ENCODE measurements at regions of chr11 and their contacts with region 1.

Region 1: DNA sequence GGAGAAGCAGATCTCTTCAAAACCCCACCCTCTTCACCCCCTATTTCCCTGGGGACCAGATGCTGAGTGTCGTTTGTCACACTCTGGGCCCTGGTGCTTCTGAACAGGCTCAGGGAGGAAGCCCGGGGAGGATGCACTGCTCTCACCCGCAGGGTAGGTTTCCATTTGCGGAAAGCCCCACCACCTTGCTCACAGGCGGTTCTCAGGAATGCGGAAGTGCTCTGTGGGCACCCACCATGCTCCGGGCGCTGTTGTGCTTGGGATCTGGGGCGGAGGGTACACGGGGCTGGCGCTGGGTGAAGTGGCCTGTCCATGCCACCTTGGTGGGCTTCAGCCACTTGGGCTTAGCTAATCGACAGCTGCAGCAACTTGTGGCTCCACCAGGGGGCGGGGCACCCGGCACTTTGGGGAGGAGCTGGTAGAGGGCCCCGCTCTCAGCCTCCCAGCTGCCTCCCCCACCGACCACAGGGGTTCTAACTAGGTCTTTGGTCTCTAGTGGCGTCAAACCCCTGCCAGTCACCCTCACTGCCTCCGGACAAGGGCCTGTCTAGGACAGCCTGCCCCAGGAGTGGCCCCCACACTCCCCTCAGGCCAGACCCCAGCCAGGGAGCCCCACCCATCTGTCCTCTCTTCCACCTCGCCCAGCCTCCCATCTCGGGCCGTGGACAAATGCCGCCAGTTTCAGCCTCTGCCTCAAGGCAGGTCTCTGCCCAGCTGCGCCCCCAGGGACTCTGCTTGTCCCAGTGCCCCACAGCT is 7.4 kb downstream of the NDUFV1 start:
- DNase-seq: peak; percentile 84
- ATAC-seq: peak; percentile 39
- H3K4me3 Mint-ChIP-seq: no peak overlapping the region
- H3K27ac Mint-ChIP-seq: no peak overlapping the region
- H3K4me1 Mint-ChIP-seq: peaks cover 40% of the 10 kb centered on the region
- H3K27me3 Mint-ChIP-seq: peaks cover 31% of the 10 kb centered on the region
- CTCF ChIP-seq: peak; percentile 76

Region 2: GRCh38 chr11:67519726-67520125 is 94.4 kb before region 1 on chr11:
- CTCF ChIA-PET with region 1: no interaction called
- POLR2A ChIA-PET with region 1: no interaction called
- DNase-seq: no peak
- ATAC-seq: no peak
- H3K4me3 Mint-ChIP-seq: no peak overlapping the region
- H3K27ac Mint-ChIP-seq: no peak overlapping the region
- H3K4me1 Mint-ChIP-seq: no peaks in the 10 kb centered on the region
- H3K27me3 Mint-ChIP-seq: peaks cover 3% of the 10 kb centered on the region; the same call in 1 of the 2 replicates
- CTCF ChIP-seq: no peak

Region 3: DNA sequence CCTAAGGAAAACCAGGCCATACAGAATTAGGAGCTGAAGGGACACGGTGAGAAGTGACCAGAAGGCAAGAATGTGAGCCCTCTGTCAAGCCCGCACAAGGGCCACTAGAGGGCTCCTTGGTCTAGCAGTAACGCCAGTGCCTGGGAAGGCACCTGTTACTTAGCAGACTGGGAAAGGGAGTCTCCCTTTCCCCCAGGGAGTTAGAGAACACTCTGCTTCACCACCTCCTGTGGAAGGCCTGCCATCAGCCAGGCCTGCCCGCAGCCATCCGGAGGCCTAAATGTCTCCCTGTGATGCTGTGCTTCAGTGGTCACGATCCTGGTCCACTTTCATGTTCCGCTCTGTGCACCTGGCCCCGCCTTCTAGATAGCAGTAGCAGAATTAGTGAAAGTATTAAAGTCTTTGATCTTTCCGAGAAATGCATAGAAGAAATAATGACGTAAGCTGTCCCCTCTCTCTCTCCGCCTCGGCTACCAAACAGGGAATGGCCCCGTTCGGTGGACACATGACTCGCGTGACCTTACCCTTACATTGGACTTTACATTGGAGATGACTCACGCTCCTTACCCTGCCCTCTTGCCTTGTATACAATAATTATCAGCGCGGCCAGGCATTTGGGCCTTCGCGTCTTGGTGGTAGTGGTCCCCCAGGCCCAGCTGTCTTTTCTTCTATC is 41.3 kb before region 1 on chr11:
- CTCF ChIA-PET with region 1: interaction called, 32 read pairs
- POLR2A ChIA-PET with region 1: no interaction called
- DNase-seq: peak; percentile 71
- ATAC-seq: peak; percentile 60
- H3K4me3 Mint-ChIP-seq: no peak overlapping the region
- H3K27ac Mint-ChIP-seq: no peak overlapping the region
- H3K4me1 Mint-ChIP-seq: no peaks in the 10 kb centered on the region
- H3K27me3 Mint-ChIP-seq: peaks cover 30% of the 10 kb centered on the region
- CTCF ChIP-seq: 0 out of 2 replicates have a peak, but pooled peaks have one; percentile 39

Region 4: DNA sequence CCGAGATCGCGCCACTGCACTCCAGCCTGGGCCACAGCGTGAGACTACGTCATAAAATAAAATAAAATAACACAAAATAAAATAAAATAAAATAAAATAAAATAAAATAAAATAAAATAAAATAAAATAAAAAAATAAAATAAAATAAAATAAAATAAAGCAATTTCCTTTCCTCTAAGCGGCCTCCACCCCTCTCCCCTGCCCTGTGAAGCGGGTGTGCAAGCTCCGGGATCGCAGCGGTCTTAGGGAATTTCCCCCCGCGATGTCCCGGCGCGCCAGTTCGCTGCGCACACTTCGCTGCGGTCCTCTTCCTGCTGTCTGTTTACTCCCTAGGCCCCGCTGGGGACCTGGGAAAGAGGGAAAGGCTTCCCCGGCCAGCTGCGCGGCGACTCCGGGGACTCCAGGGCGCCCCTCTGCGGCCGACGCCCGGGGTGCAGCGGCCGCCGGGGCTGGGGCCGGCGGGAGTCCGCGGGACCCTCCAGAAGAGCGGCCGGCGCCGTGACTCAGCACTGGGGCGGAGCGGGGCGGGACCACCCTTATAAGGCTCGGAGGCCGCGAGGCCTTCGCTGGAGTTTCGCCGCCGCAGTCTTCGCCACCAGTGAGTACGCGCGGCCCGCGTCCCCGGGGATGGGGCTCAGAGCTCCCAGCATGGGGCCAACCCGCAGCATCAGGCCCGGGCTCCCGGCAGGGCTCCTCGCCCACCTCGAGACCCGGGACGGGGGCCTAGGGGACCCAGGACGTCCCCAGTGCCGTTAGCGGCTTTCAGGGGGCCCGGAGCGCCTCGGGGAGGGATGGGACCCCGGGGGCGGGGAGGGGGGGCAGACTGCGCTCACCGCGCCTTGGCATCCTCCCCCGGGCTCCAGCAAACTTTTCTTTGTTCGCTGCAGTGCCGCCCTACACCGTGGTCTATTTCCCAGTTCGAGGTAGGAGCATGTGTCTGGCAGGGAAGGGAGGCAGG is 30.6 kb before region 1 on chr11 and contains the start of gene GSTP1:
- CTCF ChIA-PET with region 1: interaction called, 47 read pairs
- POLR2A ChIA-PET with region 1: interaction called, 3 read pairs
- DNase-seq: peak; percentile 86
- ATAC-seq: peak; percentile 86
- H3K4me3 Mint-ChIP-seq: peak within 1 kb of the TSS; percentile 85
- H3K27ac Mint-ChIP-seq: peak within 1 kb of the TSS; percentile 100
- H3K4me1 Mint-ChIP-seq: peaks cover 53% of the 10 kb centered on the region
- H3K27me3 Mint-ChIP-seq: no peaks in the 10 kb centered on the region; the same call in 1 of the 2 replicates
- CTCF ChIP-seq: peak; percentile 69
- total RNA-seq, gene GSTP1: 1,404 to 1,452 TPM (median 1,412 TPM) in 3 replicates

Region 5: GRCh38 chr11:67592880-67593564 is 21.1 kb before region 1 on chr11:
- CTCF ChIA-PET with region 1: interaction called, 14 read pairs
- POLR2A ChIA-PET with region 1: no interaction called
- DNase-seq: no peak
- ATAC-seq: peak; percentile 53
- H3K4me3 Mint-ChIP-seq: no peak overlapping the region
- H3K27ac Mint-ChIP-seq: no peak overlapping the region
- H3K4me1 Mint-ChIP-seq: peaks cover 14% of the 10 kb centered on the region
- H3K27me3 Mint-ChIP-seq: peaks cover 5% of the 10 kb centered on the region
- CTCF ChIP-seq: no peak

Region 6: DNA sequence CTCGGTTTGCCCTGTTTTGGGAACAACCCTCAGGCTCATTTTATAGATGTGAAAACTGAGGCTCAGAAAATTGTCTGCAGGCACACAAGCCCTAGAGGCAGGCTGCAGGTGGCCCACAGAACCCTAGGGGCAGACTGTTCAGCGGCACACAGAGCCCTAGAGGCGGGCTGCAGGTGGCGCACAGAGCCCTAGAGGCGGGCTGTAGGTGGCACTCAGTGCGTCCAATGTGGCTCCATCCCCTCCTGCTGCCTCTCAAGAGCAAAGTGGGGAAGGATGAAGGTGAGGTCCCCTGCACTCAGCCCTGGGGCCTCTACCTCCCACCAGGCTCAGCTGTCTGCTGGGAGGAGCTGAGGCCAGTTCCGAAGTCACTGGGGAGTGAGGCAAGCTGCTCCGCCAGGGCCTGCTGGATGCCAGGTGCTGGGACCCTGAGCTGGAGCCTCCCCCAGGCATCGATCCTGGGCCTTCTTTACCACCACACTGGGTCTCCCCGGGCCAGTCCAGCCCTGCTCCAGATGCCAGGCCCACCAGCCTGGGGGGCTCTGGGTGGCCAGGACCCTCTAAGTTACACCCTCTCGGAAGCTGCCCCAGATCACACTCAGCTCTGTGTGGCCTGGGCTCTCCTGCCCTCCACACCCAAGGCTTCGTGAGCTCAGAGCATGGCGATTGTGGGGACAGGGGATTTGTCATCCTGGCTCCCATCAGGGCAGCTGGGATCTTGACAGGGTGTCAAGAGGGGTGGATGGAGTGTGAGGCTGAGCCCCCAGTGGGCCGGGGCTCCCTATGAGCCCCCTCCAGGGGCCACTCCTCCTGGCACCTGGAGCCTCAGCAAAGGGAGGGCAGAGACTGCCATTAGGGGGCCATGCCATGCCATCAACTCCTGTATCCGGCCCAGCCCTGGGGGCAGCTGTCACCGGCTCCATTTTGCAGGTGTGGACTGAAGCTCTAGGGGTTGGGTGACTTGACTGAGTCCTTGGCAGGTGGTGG is 34.3 kb after region 1 on chr11:
- CTCF ChIA-PET with region 1: interaction called, 11 read pairs
- POLR2A ChIA-PET with region 1: no interaction called
- DNase-seq: peak; percentile 71
- ATAC-seq: peak; percentile 89
- H3K4me3 Mint-ChIP-seq: no peak overlapping the region
- H3K27ac Mint-ChIP-seq: no peak overlapping the region
- H3K4me1 Mint-ChIP-seq: peaks cover 6% of the 10 kb centered on the region
- H3K27me3 Mint-ChIP-seq: no peaks in the 10 kb centered on the region; the same call in 1 of the 2 replicates
- CTCF ChIP-seq: no peak

Region 7: DNA sequence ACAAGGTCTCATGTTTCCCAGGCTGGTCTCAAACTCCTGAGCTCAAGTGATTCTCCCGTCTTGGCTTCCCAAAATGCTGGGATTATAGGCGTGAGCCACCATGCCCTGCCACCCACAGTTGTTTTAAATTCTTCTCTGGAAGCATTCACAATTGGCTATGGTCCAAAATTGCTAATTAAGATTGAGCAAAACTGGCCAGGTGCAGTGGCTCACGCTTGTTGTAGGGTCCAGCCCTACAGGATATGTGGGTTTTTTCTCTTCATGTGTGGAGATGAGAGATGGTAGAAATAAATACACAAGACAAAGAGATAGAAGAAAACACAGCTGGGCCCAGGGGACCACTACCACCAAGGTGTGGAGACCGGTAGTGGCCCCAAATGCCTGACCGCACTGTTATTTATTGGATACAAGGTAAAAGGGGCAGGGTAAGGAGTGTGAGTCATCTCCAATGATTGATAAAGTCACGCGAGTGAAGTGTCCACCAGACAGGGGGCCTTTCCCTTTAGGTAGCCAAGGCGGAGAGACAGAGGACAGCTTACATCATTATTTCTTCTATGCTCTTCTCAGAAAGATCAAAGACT is 44.6 kb after region 1 on chr11:
- CTCF ChIA-PET with region 1: interaction called, 11 read pairs
- POLR2A ChIA-PET with region 1: no interaction called
- DNase-seq: no peak
- ATAC-seq: no peak
- H3K4me3 Mint-ChIP-seq: no peak overlapping the region
- H3K27ac Mint-ChIP-seq: no peak overlapping the region
- H3K4me1 Mint-ChIP-seq: no peaks in the 10 kb centered on the region
- H3K27me3 Mint-ChIP-seq: no peaks in the 10 kb centered on the region; the same call in 1 of the 2 replicates
- CTCF ChIP-seq: no peak

Region 8: DNA sequence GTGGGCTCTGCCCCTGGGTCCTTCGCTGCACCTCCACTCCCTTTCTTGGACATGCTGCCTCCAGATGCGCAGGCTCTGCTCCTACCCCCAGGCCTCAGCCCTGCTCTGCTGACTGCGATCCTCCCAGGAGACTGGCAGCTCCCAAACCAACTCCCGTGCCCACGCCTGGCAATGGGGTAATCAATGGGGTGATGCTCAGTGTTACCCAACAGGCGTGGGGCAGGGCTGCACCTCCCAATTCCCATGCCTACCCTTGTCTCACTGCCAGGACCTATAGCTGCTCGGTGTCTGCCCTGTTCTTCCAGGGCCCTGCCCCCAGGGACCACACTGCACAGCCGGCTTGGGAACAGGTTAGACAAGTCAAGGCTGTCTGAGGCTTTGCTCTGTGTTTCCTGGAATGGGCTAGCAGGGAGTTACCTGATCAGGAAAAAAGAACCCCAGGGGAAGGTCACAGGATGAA is 60.3 kb after region 1 on chr11 and contains the start of gene ALDH3B2:
- CTCF ChIA-PET with region 1: no interaction called
- POLR2A ChIA-PET with region 1: no interaction called
- DNase-seq: no peak
- ATAC-seq: peak; percentile 91
- H3K4me3 Mint-ChIP-seq: no peak within 1 kb of the TSS
- H3K27ac Mint-ChIP-seq: peak within 1 kb of the TSS; percentile 63; the same call in 1 of the 2 replicates
- H3K4me1 Mint-ChIP-seq: peaks cover 20% of the 10 kb centered on the region
- H3K27me3 Mint-ChIP-seq: no peaks in the 10 kb centered on the region; the same call in 1 of the 2 replicates
- CTCF ChIP-seq: no peak
- total RNA-seq, gene ALDH3B2: 0.13 to 0.30 TPM (median 0.30 TPM) in 3 replicates

Region 9: GRCh38 chr11:67685641-67686495 is 71.7 kb after region 1 on chr11:
- CTCF ChIA-PET with region 1: no interaction called
- POLR2A ChIA-PET with region 1: no interaction called
- DNase-seq: no peak
- ATAC-seq: no peak
- H3K4me3 Mint-ChIP-seq: no peak overlapping the region
- H3K27ac Mint-ChIP-seq: 0 out of 2 replicates have a peak overlapping the region, but pooled peaks have one; percentile 81
- H3K4me1 Mint-ChIP-seq: peaks cover 26% of the 10 kb centered on the region
- H3K27me3 Mint-ChIP-seq: no peaks in the 10 kb centered on the region; the same call in 1 of the 2 replicates
- CTCF ChIP-seq: no peak

Region 10: DNA sequence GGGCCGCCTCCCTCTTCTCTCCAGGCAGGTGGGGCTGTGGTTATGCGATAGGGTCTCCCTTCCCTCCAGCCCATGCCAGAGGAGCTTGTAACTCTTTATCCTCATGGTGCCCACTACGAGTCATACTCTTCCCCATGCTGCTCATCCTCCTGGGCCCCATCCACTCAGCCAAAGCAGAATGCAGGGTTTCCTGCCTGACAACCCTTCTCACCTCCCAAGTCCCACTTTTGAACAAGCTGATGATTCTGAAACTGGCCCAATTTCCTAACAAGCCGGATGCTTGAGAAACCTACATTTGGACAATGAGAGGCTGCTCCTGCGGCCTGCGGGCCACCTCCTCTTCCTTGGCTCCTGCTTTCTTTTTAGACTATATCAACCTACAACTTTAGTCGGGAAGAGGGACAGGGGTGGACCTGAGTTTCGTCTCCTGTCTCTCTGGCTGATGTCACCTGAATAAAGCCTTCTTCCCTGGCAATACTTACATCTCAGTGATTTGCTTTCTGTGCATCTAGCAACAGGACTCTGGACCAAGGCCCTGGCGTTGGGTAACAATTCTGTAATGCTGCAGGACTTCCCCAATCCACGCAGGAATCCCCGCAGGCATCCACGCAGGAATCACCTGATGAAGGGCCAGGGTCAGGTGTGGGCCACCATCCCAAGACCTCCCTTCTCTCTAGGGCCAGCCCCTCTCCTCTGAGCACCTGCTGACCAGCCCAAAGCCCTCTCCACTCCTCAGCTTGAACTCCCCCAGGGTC is 414.8 kb after region 1 on chr11:
- CTCF ChIA-PET with region 1: interaction called, 10 read pairs
- POLR2A ChIA-PET with region 1: no interaction called
- DNase-seq: no peak
- ATAC-seq: no peak
- H3K4me3 Mint-ChIP-seq: peak overlapping the region; percentile 96
- H3K27ac Mint-ChIP-seq: peak overlapping the region; percentile 61
- H3K4me1 Mint-ChIP-seq: peaks cover 19% of the 10 kb centered on the region
- H3K27me3 Mint-ChIP-seq: no peaks in the 10 kb centered on the region
- CTCF ChIP-seq: no peak